Heart right ventricle (tissue), 16 donors: ENCODE measurements at regions of chr21 and their contacts with region 1.

Region 1: DNA sequence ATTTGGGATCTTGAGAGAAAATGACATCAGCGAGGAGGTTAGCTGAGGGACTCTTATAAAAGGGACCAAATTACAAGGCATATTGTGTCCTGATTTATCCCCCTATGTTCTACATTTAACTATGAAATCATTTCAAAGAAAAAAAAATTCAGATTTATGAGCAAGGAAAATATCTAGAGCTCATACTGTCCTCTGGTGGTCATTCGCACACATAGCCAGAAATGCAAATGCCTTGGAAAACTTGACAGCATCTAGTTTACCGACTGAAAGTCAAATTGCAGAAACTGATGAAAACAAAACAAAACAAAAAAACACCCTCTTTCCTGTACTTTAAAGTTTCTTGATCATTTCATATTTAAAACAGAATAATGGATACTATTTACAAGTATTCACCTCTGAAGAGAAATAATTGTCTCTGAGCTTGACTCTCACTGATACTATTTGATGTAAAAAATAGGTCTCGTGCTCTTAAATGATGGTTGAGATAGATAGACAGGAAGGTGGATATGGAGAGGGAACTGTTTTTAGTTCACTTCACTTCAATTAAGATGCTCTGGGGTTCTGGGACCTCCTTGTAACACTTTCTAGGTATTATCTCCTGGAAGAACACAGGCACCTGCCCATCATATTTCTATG is 253.8 kb downstream of the PCP4 start:
- DNase-seq: no peak
- ATAC-seq: peak in 1 of 8 donors; percentile 29
- H3K4me3 ChIP-seq: no peak overlapping the region
- H3K27ac ChIP-seq: no peak overlapping the region
- H3K4me1 ChIP-seq: peaks cover 0 to 3% (median 0%) of the 10 kb centered on the region in 9 donors
- H3K27me3 ChIP-seq: peaks cover 0 to 22% (median 0%) of the 10 kb centered on the region in 7 donors
- CTCF ChIP-seq: peak; percentile 48 to 84 (median 74)

Region 2: GRCh38 chr21:39788383-39788782 is 332.7 kb before region 1 on chr21:
- intact Hi-C with region 1: loop called in 9 of 10 experiments (anchors 1 to 10 kb)
- DNase-seq: peak; percentile 72 to 82
- ATAC-seq: peak; percentile 98 to 100 (median 99)
- H3K4me3 ChIP-seq: peak overlapping the region in 8 of 10 donors; percentile 6 to 49 (median 36)
- H3K27ac ChIP-seq: peak overlapping the region in 8 of 10 donors; percentile 8 to 72 (median 34)
- H3K4me1 ChIP-seq: peaks cover 0 to 20% (median 0%) of the 10 kb centered on the region in 9 donors
- H3K27me3 ChIP-seq: no peaks in the 10 kb centered on the region
- CTCF ChIP-seq: peak; percentile 51 to 89 (median 78)

Region 3: GRCh38 chr21:39867198-39867650 is 253.8 kb before region 1 on chr21 and contains the start of gene PCP4:
- intact Hi-C with region 1: loop called in 8 of 10 experiments (anchors 2 to 10 kb)
- DNase-seq: peak in 1 of 2 donors; percentile 10
- ATAC-seq: peak in 2 of 8 donors; percentile 29 to 34
- H3K4me3 ChIP-seq: no peak within 1 kb of the TSS
- H3K27ac ChIP-seq: no peak within 1 kb of the TSS
- H3K4me1 ChIP-seq: no peaks in the 10 kb centered on the region
- H3K27me3 ChIP-seq: peaks cover 0 to 22% (median 0%) of the 10 kb centered on the region in 7 donors
- CTCF ChIP-seq: peak; percentile 45 to 81 (median 74)
- total RNA-seq, gene PCP4: 2.7 to 6.6 (median 3.6) TPM

Region 4: GRCh38 chr21:39874759-39875158 is 246.3 kb before region 1 on chr21:
- intact Hi-C with region 1: loop called in 6 of 10 experiments (anchors 5 to 10 kb)
- DNase-seq: no peak
- ATAC-seq: no peak
- H3K4me3 ChIP-seq: no peak overlapping the region
- H3K27ac ChIP-seq: no peak overlapping the region
- H3K4me1 ChIP-seq: no peaks in the 10 kb centered on the region
- H3K27me3 ChIP-seq: no peaks in the 10 kb centered on the region
- CTCF ChIP-seq: no peak

Region 5: GRCh38 chr21:40043431-40043830 is 77.6 kb before region 1 on chr21:
- intact Hi-C with region 1: loop called in 6 of 10 experiments (anchors 2 to 10 kb)
- DNase-seq: no peak
- ATAC-seq: peak in 2 of 8 donors; percentile 50 to 71
- H3K4me3 ChIP-seq: no peak overlapping the region
- H3K27ac ChIP-seq: no peak overlapping the region
- H3K4me1 ChIP-seq: no peaks in the 10 kb centered on the region
- H3K27me3 ChIP-seq: no peaks in the 10 kb centered on the region
- CTCF ChIP-seq: peak in 4 of 9 donors; percentile 27 to 44 (median 36)

Region 6: GRCh38 chr21:40049394-40050290 is 71.4 kb before region 1 on chr21:
- intact Hi-C with region 1: loop called in 5 of 10 experiments (anchors 5 to 10 kb)
- DNase-seq: no peak
- ATAC-seq: no peak
- H3K4me3 ChIP-seq: no peak overlapping the region
- H3K27ac ChIP-seq: no peak overlapping the region
- H3K4me1 ChIP-seq: peaks cover 0 to 14% (median 0%) of the 10 kb centered on the region in 9 donors
- H3K27me3 ChIP-seq: no peaks in the 10 kb centered on the region
- CTCF ChIP-seq: no peak

Region 7: DNA sequence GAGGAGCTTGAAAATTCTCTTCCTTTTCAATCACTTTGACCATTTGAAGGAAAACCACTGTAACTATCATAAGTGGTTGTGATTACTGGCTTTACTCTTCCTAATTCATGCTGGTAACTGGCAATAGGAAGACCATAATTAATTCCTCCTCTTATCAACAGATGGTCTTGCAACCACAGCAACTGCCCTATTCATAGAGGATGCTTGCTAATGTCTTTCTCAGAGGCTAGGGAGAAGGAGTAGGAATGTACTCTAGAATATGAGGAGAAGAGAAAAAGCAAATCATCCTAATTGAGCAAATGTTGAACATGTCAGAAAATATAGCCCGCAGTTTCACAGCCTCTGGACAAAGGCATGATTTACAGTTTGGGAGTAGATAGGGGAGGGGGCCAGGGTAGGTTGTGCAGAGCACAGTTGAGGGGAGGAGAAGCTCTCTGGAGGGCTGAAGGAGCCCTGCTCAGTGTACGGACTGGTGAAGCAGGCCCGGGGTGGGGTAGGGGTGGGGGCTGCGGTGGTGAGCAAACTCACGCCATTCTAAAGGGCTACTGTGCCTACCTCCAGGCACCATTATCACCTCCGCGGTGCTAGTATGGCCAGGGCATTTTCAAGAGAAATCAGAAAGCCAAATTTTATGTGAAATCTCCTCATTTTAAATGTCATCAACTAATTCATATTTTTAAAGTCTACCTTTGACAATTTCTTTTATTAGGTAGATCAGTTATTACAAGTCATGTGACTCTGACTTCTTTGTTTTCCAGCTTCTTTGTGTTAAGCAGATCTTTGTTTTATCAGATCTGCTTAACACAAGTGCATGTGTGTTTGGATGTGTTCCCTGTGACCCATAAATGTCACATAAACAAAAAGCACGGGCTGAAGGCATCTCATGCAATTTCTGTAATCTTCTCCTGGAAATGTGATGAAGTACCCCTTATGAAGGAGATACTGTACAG is 60.7 kb before region 1 on chr21:
- intact Hi-C with region 1: no loop called
- DNase-seq: no peak
- ATAC-seq: no peak
- H3K4me3 ChIP-seq: no peak overlapping the region
- H3K27ac ChIP-seq: no peak overlapping the region
- H3K4me1 ChIP-seq: peaks cover 0 to 8% (median 0%) of the 10 kb centered on the region in 9 donors
- H3K27me3 ChIP-seq: no peaks in the 10 kb centered on the region
- CTCF ChIP-seq: no peak

Region 8: GRCh38 chr21:40099809-40100208 is 21.2 kb before region 1 on chr21:
- intact Hi-C with region 1: loop called in 1 of 10 experiments (anchors 2 kb)
- DNase-seq: no peak
- ATAC-seq: no peak
- H3K4me3 ChIP-seq: no peak overlapping the region
- H3K27ac ChIP-seq: no peak overlapping the region
- H3K4me1 ChIP-seq: peaks cover 0 to 3% (median 0%) of the 10 kb centered on the region in 9 donors
- H3K27me3 ChIP-seq: peaks cover 0 to 3% (median 0%) of the 10 kb centered on the region in 7 donors
- CTCF ChIP-seq: no peak